ENCODE measurements at regions of chr11 and their contacts with region 1.

Region 1: DNA sequence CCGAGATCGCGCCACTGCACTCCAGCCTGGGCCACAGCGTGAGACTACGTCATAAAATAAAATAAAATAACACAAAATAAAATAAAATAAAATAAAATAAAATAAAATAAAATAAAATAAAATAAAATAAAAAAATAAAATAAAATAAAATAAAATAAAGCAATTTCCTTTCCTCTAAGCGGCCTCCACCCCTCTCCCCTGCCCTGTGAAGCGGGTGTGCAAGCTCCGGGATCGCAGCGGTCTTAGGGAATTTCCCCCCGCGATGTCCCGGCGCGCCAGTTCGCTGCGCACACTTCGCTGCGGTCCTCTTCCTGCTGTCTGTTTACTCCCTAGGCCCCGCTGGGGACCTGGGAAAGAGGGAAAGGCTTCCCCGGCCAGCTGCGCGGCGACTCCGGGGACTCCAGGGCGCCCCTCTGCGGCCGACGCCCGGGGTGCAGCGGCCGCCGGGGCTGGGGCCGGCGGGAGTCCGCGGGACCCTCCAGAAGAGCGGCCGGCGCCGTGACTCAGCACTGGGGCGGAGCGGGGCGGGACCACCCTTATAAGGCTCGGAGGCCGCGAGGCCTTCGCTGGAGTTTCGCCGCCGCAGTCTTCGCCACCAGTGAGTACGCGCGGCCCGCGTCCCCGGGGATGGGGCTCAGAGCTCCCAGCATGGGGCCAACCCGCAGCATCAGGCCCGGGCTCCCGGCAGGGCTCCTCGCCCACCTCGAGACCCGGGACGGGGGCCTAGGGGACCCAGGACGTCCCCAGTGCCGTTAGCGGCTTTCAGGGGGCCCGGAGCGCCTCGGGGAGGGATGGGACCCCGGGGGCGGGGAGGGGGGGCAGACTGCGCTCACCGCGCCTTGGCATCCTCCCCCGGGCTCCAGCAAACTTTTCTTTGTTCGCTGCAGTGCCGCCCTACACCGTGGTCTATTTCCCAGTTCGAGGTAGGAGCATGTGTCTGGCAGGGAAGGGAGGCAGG is at the start of gene GSTP1:
- DNase-seq: peak; percentile 94
- H3K4me3 ChIP-seq: peak within 1 kb of the TSS; percentile 68 to 85 (median 83)
- H3K27ac ChIP-seq: peak within 1 kb of the TSS; percentile 63
- H3K4me1 ChIP-seq: peaks cover 17% of the 10 kb centered on the region
- H3K27me3 ChIP-seq: peaks cover 2 to 4% of the 10 kb centered on the region in 2 experiments
- CTCF ChIP-seq: peak; percentile 68 to 84
- POLR2A ChIP-seq: peak; percentile 99
- total RNA-seq, gene GSTP1: 962 and 997 TPM in 2 replicates

Region 2: DNA sequence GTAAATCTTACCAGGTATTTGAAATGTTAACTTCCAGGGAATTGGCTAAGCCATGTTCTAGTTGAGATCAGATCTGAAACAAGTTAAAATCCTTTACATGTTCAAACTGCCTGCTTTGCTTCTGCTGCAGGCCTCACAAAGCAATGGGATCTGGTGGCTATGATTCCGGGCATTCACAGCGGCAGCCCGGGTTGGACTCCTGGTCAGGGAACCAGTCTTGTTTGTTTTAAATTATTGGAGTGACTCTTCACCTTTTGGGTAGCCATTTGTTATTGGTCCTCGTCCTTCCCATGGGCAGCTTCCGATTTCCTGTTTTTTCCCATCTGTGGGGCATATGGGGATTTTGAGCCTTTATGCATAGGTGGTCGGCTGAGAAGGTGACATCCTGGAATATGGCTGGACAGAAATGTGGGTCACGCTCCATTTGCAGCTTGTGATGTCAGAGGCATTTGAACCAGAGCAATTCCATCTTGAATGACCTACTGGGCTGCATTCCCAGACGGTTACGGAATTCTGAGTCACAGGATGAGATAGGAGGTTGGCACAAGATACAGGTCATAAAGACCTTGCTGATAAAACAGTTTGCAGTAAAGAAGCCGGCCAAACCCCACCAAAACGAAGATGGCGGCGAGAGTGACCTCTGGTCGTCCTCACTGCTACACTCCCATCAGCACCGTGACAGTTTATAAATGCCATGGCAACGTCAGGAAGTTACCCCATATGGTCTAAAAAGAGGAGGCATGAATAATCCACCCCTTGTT is 20.0 kb before region 1 on chr11:
- CTCF ChIA-PET with region 1: no interaction called
- POLR2A ChIA-PET with region 1: interaction called, 6 read pairs
- dilution Hi-C with region 1: no loop called
- intact Hi-C with region 1: loop called (anchors 1 kb)
- DNase-seq: peak; percentile 94
- H3K4me3 ChIP-seq: no peak overlapping the region
- H3K27ac ChIP-seq: peak overlapping the region; percentile 94
- H3K4me1 ChIP-seq: peaks cover 15% of the 10 kb centered on the region
- H3K27me3 ChIP-seq: no peaks in the 10 kb centered on the region
- CTCF ChIP-seq: no peak
- POLR2A ChIP-seq: peak; percentile 40

Region 3: GRCh38 chr11:67606492-67607201 is 23.1 kb after region 1 on chr11 and contains the start of gene NDUFV1:
- CTCF ChIA-PET with region 1: no interaction called
- POLR2A ChIA-PET with region 1: no interaction called
- dilution Hi-C with region 1: no loop called
- intact Hi-C with region 1: loop called (anchors 1 kb)
- DNase-seq: peak; percentile 94
- H3K4me3 ChIP-seq: peak within 1 kb of the TSS; percentile 32 to 92 (median 61)
- H3K27ac ChIP-seq: peak within 1 kb of the TSS; percentile 25
- H3K4me1 ChIP-seq: peaks cover 6% of the 10 kb centered on the region
- H3K27me3 ChIP-seq: no peaks in the 10 kb centered on the region
- CTCF ChIP-seq: peak; percentile 48 to 78
- POLR2A ChIP-seq: peak; percentile 88
- total RNA-seq, gene NDUFV1: 179 and 191 TPM in 2 replicates